Vagina (tissue), 2 donors: ENCODE measurements at regions of chr15 and their contacts with region 1.

Region 1: DNA sequence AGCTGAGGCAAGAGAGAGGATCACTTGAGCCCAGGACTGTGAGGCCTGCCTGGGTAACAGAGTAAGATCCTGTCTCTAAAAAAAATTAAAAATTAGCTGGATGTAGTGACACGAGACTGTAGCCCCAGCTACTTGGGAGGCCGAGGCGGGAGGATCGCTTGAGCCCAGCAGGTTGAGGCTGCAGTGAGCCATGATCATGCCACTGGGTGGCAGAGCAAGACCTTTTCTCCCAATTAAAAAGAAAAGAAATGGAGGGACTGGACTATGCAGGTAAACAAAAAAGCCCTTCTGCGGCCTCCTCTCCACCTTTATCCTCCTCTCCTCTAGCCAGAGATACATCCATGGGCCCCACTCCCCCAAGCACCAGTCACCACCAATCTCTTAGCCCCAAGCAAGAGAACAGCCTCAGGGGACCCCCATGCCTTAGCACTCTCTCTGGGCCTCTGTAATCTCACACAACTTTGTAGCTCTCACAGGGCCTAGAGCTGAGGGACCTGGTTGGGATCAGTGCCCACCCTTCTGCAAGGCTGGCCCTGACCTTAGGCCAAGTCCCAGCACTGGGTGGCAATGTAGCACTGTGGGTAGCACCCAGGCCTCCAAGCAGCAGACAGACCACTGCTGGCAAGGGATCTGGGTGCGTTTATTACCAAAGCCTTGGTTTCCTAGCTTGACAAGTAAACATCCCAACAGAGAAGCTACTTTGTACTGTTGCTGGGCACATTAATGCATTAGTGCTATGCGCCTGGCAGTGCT is 43.4 kb downstream of the FAM174B start:
- DNase-seq: no peak
- H3K4me3 ChIP-seq: no peak overlapping the region
- H3K27ac ChIP-seq: no peak overlapping the region
- H3K4me1 ChIP-seq: peaks cover 8% of the 10 kb centered on the region
- H3K27me3 ChIP-seq: no peaks in the 10 kb centered on the region
- CTCF ChIP-seq: no peak
- POLR2A ChIP-seq: no peak

Region 2: GRCh38 chr15:92683232-92683834 is 71.2 kb after region 1 on chr15:
- intact Hi-C with region 1: loop called (anchors 2 kb)
- DNase-seq: peak in 1 of 2 donors; percentile 89
- H3K4me3 ChIP-seq: no peak overlapping the region
- H3K27ac ChIP-seq: peak overlapping the region; percentile 40
- H3K4me1 ChIP-seq: peaks cover 15% of the 10 kb centered on the region
- H3K27me3 ChIP-seq: no peaks in the 10 kb centered on the region
- CTCF ChIP-seq: peak in 1 of 3 experiments; percentile 46
- POLR2A ChIP-seq: no peak